Activated naive CD4-positive, alpha-beta T cell treated with anti-CD3 and anti-CD28 coated beads for 36 hours (primary cell): ENCODE measurements at regions of chr11 and their contacts with region 1.

Region 1: DNA sequence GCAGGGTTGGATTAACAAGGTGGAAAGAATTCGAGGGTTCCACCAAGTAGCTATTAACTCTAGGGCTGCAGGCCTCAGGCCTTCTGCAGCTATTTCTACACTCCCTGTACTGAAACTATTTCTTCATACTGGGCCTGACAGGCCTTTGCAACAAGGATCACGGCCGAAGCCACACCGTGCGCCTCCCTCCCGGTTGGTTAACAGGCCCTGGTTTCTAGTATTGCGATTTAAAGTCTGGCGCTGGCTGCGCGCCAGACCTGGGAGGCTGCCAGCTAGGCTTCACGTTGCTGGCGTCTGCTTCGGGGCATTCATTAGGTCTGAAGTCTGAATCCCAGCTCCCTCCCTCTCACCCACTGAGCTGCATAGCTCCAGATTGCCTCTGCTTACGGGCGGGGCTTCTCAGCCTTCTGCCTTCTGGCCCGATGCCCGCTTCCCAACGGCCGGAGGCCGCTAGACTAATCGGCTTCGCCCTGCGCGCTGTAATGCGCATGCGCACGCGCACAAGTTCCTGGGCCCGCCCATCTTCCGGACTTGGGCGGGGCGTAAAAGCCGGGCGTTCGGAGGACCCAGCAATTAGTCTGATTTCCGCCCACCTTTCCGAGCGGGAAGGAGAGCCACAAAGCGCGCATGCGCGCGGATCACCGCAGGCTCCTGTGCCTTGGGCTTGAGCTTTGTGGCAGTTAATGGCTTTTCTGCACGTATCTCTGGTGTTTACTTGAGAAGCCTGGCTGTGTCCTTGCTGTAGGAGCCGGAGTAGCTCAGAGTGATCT is 1.6 kb downstream of the LDHA start:
- DNase-seq: peak; percentile 96
- H3K4me3 Mint-ChIP-seq: peak overlapping the region; percentile 97
- H3K27ac Mint-ChIP-seq: peak overlapping the region; percentile 99
- H3K4me1 Mint-ChIP-seq: peaks cover 62% of the 10 kb centered on the region
- H3K27me3 Mint-ChIP-seq: no peaks in the 10 kb centered on the region

Region 2: GRCh38 chr11:17207317-17208258 is 1188.3 kb before region 1 on chr11 and contains the start of gene PIK3C2A:
- CTCF ChIA-PET with region 1: no interaction called
- intact Hi-C with region 1: loop called (anchors 5 kb)
- DNase-seq: peak; percentile 97
- H3K4me3 Mint-ChIP-seq: peak within 1 kb of the TSS; percentile 99
- H3K27ac Mint-ChIP-seq: peak within 1 kb of the TSS; percentile 92
- H3K4me1 Mint-ChIP-seq: peaks cover 30% of the 10 kb centered on the region
- H3K27me3 Mint-ChIP-seq: no peaks in the 10 kb centered on the region
- total RNA-seq, gene PIK3C2A: 16.4 to 17.3 TPM

Region 3: GRCh38 chr11:18243783-18244362 is 152.0 kb before region 1 on chr11:
- CTCF ChIA-PET with region 1: interaction called, 5 read pairs
- intact Hi-C with region 1: loop called (anchors 5 kb)
- DNase-seq: peak; percentile 81
- H3K4me3 Mint-ChIP-seq: no peak overlapping the region
- H3K27ac Mint-ChIP-seq: no peak overlapping the region
- H3K4me1 Mint-ChIP-seq: peaks cover 6% of the 10 kb centered on the region
- H3K27me3 Mint-ChIP-seq: peaks cover 4% of the 10 kb centered on the region

Region 4: GRCh38 chr11:18408558-18409242 is 12.8 kb after region 1 on chr11:
- CTCF ChIA-PET with region 1: interaction called, 16 read pairs
- intact Hi-C with region 1: loop called (anchors 1 kb)
- DNase-seq: no peak
- H3K4me3 Mint-ChIP-seq: no peak overlapping the region
- H3K27ac Mint-ChIP-seq: no peak overlapping the region
- H3K4me1 Mint-ChIP-seq: peaks cover 2% of the 10 kb centered on the region
- H3K27me3 Mint-ChIP-seq: no peaks in the 10 kb centered on the region

Region 5: DNA sequence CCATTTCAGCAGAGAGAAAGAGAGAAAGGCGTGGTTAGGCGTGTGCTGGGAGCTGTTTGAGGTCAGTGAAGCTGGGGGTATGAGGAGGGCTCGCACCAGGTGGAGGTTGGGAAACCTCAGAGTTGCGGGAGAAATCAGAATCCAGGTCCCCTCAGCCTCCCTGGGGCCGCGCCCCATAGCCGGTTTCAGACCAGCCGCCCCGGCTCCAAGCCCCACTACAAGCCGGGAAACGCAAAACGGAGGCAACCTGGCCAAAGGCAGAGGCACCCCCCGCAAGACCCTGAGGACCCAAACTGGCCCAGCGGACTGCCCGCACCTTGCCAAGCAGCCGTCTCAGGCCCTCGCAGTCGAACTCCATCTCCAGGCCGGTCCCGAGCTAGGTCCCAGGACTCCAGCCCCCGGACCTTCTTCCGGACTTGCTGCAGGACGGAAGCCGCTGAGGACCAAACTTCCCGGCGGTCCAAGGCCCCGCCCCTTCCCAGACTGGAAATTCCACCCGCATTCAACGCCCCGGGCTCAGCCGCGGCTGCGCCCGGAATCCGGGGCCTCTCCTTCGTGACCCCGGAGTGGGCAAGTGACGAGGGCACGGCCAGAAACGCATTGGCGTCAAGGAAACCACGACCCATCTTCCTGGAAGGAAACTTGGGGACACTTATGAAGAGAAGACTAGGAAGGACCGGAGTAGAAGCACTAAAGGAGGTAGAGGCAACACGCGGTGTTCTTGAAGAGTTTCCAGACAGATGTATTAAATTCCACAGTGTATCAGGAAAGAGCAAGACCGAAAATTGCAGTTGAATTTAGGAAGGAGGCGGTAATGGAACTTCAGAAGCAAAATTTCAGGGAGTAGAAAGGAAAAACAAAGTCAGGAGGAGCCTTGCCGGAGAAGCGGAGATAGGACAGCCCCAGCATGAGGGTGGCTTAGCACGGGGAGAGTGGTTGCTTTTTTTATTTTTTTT is 192.7 kb after region 1 on chr11 and contains the start of gene UEVLD:
- CTCF ChIA-PET with region 1: no interaction called
- intact Hi-C with region 1: loop called (anchors 2 kb)
- DNase-seq: peak; percentile 63
- H3K4me3 Mint-ChIP-seq: no peak within 1 kb of the TSS
- H3K27ac Mint-ChIP-seq: no peak within 1 kb of the TSS
- H3K4me1 Mint-ChIP-seq: peaks cover 8% of the 10 kb centered on the region
- H3K27me3 Mint-ChIP-seq: no peaks in the 10 kb centered on the region
- total RNA-seq, gene UEVLD: 8.9 to 9.2 TPM

Region 6: GRCh38 chr11:18721561-18722292 is 325.8 kb after region 1 on chr11:
- CTCF ChIA-PET with region 1: interaction called, 8 read pairs
- intact Hi-C with region 1: loop called (anchors 5 kb)
- DNase-seq: peak; percentile 70
- H3K4me3 Mint-ChIP-seq: peak overlapping the region; percentile 78
- H3K27ac Mint-ChIP-seq: no peak overlapping the region
- H3K4me1 Mint-ChIP-seq: peaks cover 2% of the 10 kb centered on the region
- H3K27me3 Mint-ChIP-seq: no peaks in the 10 kb centered on the region